ENCODE measurements at regions of chr19 and their contacts with region 1.

Region 1: DNA sequence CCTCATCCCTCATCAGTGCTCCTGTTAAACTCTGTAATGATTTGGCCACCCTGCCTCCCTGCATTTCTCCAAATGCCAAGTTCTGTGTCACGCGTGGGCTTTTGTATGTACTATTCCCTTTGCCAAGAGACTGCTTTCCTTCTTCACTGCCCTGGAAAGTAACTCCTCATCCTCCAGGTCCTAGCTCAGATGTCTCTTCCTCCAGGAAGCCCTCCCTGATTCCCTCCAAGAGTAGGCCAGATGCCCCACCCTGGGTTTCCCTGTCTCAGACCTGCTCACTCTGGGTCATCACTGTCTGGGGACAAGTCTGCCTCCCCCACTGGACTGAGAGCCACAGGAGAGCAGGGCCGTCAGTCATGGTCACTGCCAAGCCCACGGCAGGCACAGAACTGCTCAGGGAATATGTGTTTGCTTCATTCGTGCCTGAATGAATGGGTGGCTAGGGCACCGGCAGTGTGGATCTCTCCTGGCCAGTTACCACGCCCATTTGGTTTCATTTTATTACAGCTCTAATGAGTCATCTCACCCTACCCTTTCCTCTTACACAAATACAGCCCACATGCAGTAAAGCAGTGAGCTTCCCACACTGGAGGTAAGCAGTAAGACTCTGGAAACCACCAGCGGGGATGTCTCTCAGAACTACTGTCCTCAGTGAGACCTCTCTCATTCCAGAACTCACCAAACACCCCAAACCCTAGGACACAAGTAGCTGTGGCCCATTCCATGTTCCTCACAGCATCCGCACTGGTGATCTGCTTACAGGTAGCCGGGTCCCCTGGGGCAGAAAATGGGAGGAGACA is 12.1 kb upstream of the GPR4 start:
- DNase-seq: peak; percentile 33
- H3K4me3 Mint-ChIP-seq: peak overlapping the region; percentile 22
- H3K27ac Mint-ChIP-seq: peak overlapping the region; percentile 91
- H3K4me1 Mint-ChIP-seq: peaks cover 20% of the 10 kb centered on the region
- H3K27me3 Mint-ChIP-seq: no peaks in the 10 kb centered on the region

Region 2: GRCh38 chr19:45584332-45585157 is 29.6 kb before region 1 on chr19 and contains the start of gene OPA3:
- intact Hi-C with region 1: loop called (anchors 1 kb)
- DNase-seq: peak; percentile 98
- H3K4me3 Mint-ChIP-seq: peak within 1 kb of the TSS; percentile 89
- H3K27ac Mint-ChIP-seq: peak within 1 kb of the TSS; percentile 97
- H3K4me1 Mint-ChIP-seq: peaks cover 9% of the 10 kb centered on the region
- H3K27me3 Mint-ChIP-seq: peaks cover under 1% of the 10 kb centered on the region
- total RNA-seq, gene OPA3: 15.2 and 15.9 TPM in 2 replicates